Caco-2 (cell line): ENCODE measurements at regions of chr4 and their contacts with region 1.

Region 1: DNA sequence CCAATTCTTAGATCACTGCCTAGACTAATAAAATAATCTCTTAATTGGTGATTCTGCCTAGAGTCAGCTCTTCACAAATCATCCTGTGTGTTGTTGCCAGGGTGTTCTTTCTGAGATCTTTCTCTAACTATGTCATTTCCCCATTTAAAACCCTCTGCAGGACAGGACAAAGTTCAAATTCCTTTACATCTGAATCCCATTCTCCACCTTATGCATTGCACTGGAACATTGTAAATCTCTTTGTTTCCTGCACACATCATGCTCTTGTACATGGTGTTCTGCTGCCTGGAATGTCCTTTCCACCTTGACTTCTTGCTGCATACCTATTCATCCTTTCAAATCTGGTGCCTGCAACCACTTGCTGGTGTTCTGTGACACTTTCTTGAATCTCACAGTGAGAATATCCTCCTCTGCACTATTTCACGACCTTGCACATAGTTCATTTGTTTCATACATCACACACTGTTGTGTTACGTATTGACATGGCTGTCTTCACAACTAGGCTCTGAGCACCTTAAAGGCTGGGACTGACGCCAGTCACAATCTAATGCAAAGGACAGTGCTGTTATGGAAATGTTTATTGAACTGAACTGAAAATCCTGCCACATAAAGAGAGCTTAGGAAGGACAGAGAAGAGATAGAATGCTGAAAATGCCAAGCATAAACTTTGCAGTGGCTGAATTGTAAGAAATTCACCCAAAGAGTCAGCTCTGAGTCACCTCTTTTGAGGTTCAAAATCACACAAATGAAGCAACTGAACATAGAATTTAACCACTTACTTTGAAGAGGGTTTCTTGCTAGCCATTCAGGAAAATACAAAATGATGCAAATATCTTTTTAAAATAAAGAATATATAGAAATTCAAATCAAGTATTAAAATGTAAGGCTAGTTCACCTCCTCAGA is 26.4 kb upstream of the SMIM14 start:
- DNase-seq: peak; percentile 36 to 50
- H3K4me3 ChIP-seq: no peak overlapping the region
- H3K4me3 Mint-ChIP-seq: peak overlapping the region; percentile 48
- H3K27ac Mint-ChIP-seq: peak overlapping the region; percentile 87
- H3K4me1 ChIP-seq: peaks cover 23% of the 10 kb centered on the region
- H3K4me1 Mint-ChIP-seq: peaks cover 15% of the 10 kb centered on the region
- H3K27me3 ChIP-seq: no peaks in the 10 kb centered on the region
- H3K27me3 Mint-ChIP-seq: no peaks in the 10 kb centered on the region
- CTCF ChIP-seq: no peak

Region 2: GRCh38 chr4:39597695-39598381 is 67.2 kb before region 1 on chr4:
- CTCF ChIA-PET with region 1: no interaction called
- POLR2A ChIA-PET with region 1: no interaction called
- intact Hi-C with region 1: no loop called
- DNase-seq: no peak
- H3K4me3 ChIP-seq: no peak overlapping the region
- H3K4me3 Mint-ChIP-seq: no peak overlapping the region
- H3K27ac Mint-ChIP-seq: no peak overlapping the region
- H3K4me1 ChIP-seq: no peaks in the 10 kb centered on the region
- H3K4me1 Mint-ChIP-seq: no peaks in the 10 kb centered on the region
- H3K27me3 ChIP-seq: no peaks in the 10 kb centered on the region
- H3K27me3 Mint-ChIP-seq: no peaks in the 10 kb centered on the region
- CTCF ChIP-seq: no peak

Region 3: GRCh38 chr4:39682138-39682537 is 17.1 kb after region 1 on chr4:
- CTCF ChIA-PET with region 1: no interaction called
- POLR2A ChIA-PET with region 1: no interaction called
- intact Hi-C with region 1: loop called (anchors 2 kb)
- DNase-seq: no peak
- H3K4me3 ChIP-seq: no peak overlapping the region
- H3K4me3 Mint-ChIP-seq: no peak overlapping the region
- H3K27ac Mint-ChIP-seq: no peak overlapping the region
- H3K4me1 ChIP-seq: no peaks in the 10 kb centered on the region
- H3K4me1 Mint-ChIP-seq: no peaks in the 10 kb centered on the region
- H3K27me3 ChIP-seq: no peaks in the 10 kb centered on the region
- H3K27me3 Mint-ChIP-seq: no peaks in the 10 kb centered on the region
- CTCF ChIP-seq: no peak